ENCODE measurements at regions of chr14 and their contacts with region 1.

Region 1: GRCh38 chr14:61372842-61373555 is 51.6 kb downstream of the PRKCH start:
- DNase-seq: no peak
- H3K4me3 Mint-ChIP-seq: peak overlapping the region; percentile 9
- H3K27ac Mint-ChIP-seq: no peak overlapping the region
- H3K4me1 Mint-ChIP-seq: peaks cover 62% of the 10 kb centered on the region
- H3K27me3 Mint-ChIP-seq: no peaks in the 10 kb centered on the region

Region 2: DNA sequence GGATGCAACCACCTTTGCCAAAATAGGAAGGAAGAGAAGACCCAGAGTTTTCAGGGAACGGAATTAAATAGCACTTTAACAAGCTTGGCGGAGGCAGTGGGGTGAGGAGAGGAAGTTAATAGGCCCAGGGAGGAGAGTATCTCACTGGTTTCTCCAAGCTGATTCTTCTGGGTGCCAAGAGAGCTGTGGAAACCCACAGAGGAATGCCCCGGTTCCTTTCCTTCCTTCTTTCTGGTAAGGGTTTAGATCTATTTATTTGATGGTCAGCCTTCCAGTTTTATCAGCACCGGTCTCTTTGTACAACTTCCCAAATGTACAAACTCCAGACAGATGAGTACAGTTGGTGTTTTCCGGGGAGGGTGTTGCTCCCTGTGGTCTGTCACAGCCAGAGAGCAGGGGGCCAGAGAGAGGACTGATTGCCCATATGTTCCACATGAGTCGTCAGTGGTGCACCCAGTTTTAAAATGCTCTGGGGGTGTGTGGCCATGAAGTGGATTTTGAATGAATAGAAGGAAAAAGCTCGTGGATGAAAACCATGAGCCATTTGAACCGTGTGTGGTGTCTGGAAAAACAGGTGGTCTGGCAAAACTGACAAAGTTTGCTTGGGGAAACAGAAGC is 25.1 kb before region 1 on chr14:
- intact Hi-C with region 1: loop called (anchors 2 kb)
- DNase-seq: no peak
- H3K4me3 Mint-ChIP-seq: peak overlapping the region; percentile 70
- H3K27ac Mint-ChIP-seq: peak overlapping the region; percentile 95
- H3K4me1 Mint-ChIP-seq: peaks cover 96% of the 10 kb centered on the region
- H3K27me3 Mint-ChIP-seq: no peaks in the 10 kb centered on the region

Region 3: GRCh38 chr14:61360796-61361525 is 12.0 kb before region 1 on chr14:
- intact Hi-C with region 1: loop called (anchors 1 kb)
- DNase-seq: no peak
- H3K4me3 Mint-ChIP-seq: peak overlapping the region; percentile 9
- H3K27ac Mint-ChIP-seq: peak overlapping the region; percentile 34
- H3K4me1 Mint-ChIP-seq: peaks cover 51% of the 10 kb centered on the region
- H3K27me3 Mint-ChIP-seq: no peaks in the 10 kb centered on the region

Region 4: GRCh38 chr14:61489932-61490331 is 116.9 kb after region 1 on chr14:
- intact Hi-C with region 1: no loop called
- DNase-seq: no peak
- H3K4me3 Mint-ChIP-seq: no peak overlapping the region
- H3K27ac Mint-ChIP-seq: no peak overlapping the region
- H3K4me1 Mint-ChIP-seq: peaks cover 28% of the 10 kb centered on the region
- H3K27me3 Mint-ChIP-seq: no peaks in the 10 kb centered on the region

Measured in activated T-helper 1 cell treated with anti-CD3 and anti-CD28 coated beads, Interleukin-12 subunit alpha, Interleukin-12 subunit beta, Interleukin-2, Interleukin-4 antibody, amounts not matched to agents 30 ng/mL and 10 ng/mL and 1 ng/mL, durations not matched to agents 14 hours and 24 hours and 36 hours (primary cell).